ENCODE measurements at regions of chr20 and their contacts with region 1.

Region 1: GRCh38 chr20:7505152-7505834 is 435.0 kb downstream of the HAO1 start:
- DNase-seq: no peak
- ATAC-seq: peak; percentile 51
- H3K4me3 ChIP-seq: no peak overlapping the region
- H3K27ac ChIP-seq: no peak overlapping the region
- H3K4me1 ChIP-seq: no peaks in the 10 kb centered on the region
- H3K27me3 ChIP-seq: no peaks in the 10 kb centered on the region
- CTCF ChIP-seq: no peak
- EP300 ChIP-seq: no peak
- POLR2A ChIP-seq: no peak
- RAD21 ChIP-seq: no peak

Region 2: DNA sequence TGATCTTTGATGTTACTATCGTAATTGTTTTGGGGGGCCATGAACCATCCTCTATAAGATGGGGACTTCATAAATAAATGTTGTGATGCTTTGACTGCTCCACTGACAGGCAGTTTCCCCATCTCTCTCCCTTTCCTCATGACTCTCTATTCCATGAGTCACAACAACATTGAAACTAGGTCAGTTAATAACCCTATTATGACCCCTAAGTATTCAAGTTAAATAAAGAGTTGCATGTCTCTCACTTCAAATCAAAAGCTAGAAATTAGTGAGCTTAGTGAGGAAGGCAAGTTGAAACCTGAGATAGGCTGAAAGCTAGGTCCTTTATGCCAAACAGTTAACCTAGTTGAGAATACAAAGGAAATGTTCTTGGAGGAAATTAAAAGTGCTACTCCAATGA is 56.0 kb before region 1 on chr20:
- CTCF ChIA-PET with region 1: no interaction called
- POLR2A ChIA-PET with region 1: no interaction called
- in situ Hi-C with region 1: loop called (anchors 10 kb)
- intact Hi-C with region 1: no loop called
- DNase-seq: no peak
- ATAC-seq: no peak
- H3K4me3 ChIP-seq: no peak overlapping the region
- H3K27ac ChIP-seq: no peak overlapping the region
- H3K4me1 ChIP-seq: no peaks in the 10 kb centered on the region
- H3K27me3 ChIP-seq: no peaks in the 10 kb centered on the region
- CTCF ChIP-seq: no peak
- EP300 ChIP-seq: no peak
- POLR2A ChIP-seq: no peak
- RAD21 ChIP-seq: no peak

Region 3: DNA sequence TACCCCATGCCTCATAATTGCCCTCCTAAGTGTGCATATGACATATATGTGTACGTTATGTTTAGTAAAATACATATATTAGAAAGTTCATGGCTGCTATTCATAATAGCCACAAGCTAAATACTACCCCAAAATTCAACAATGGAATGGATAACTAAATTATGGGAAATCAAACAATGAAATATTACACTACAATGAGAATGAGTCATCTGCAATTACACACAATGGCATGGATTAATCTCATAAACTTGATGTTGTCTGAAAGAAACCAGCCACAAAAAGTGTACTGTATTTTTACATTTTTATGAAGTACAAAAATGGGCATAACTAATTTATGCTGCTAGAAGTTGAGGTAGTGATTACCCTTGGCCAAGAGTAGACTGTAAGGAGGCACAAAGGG is 42.0 kb before region 1 on chr20:
- CTCF ChIA-PET with region 1: no interaction called
- POLR2A ChIA-PET with region 1: no interaction called
- in situ Hi-C with region 1: no loop called
- intact Hi-C with region 1: no loop called
- DNase-seq: no peak
- ATAC-seq: no peak
- H3K4me3 ChIP-seq: no peak overlapping the region
- H3K27ac ChIP-seq: no peak overlapping the region
- H3K4me1 ChIP-seq: no peaks in the 10 kb centered on the region
- H3K27me3 ChIP-seq: no peaks in the 10 kb centered on the region
- CTCF ChIP-seq: no peak
- EP300 ChIP-seq: no peak
- POLR2A ChIP-seq: no peak
- RAD21 ChIP-seq: no peak

Measured in HepG2 (cell line).